Activated CD8-positive, alpha-beta T cell treated with anti-CD3 and anti-CD28 coated beads for 36 hours (primary cell): ENCODE measurements at regions of chr6 and their contacts with region 1.

Region 1: DNA sequence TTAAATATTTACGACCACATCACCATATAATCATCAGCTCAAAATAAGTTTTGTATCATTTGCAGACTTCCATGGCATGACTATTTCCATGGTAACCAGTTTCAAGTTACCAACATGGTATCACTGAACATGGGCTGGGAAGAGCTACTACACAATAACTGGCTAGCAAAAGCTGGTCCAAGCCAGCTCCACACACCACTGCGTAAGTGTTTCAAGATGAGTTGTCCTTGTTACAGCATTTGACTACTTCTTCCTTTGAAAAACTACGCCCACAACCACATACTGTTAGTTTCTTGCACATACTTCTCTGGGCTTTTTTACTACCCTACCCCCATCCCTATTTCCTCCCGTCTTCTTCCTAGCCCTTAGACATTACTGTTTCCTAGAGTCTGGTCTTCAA is 8.5 kb downstream of the CD164 start:
- DNase-seq: peak; percentile 75
- ATAC-seq: peak; percentile 92
- H3K4me3 Mint-ChIP-seq: peak overlapping the region; percentile 24
- H3K27ac Mint-ChIP-seq: peak overlapping the region; percentile 86
- H3K4me1 Mint-ChIP-seq: peaks cover 69% of the 10 kb centered on the region
- H3K27me3 Mint-ChIP-seq: no peaks in the 10 kb centered on the region
- CTCF ChIP-seq: no peak

Region 2: GRCh38 chr6:109212683-109213082 is 161.1 kb before region 1 on chr6:
- CTCF ChIA-PET with region 1: no interaction called
- POLR2A ChIA-PET with region 1: no interaction called
- intact Hi-C with region 1: no loop called
- DNase-seq: no peak
- ATAC-seq: no peak
- H3K4me3 Mint-ChIP-seq: no peak overlapping the region
- H3K27ac Mint-ChIP-seq: no peak overlapping the region
- H3K4me1 Mint-ChIP-seq: no peaks in the 10 kb centered on the region
- H3K27me3 Mint-ChIP-seq: peaks cover 4% of the 10 kb centered on the region
- CTCF ChIP-seq: no peak

Region 3: DNA sequence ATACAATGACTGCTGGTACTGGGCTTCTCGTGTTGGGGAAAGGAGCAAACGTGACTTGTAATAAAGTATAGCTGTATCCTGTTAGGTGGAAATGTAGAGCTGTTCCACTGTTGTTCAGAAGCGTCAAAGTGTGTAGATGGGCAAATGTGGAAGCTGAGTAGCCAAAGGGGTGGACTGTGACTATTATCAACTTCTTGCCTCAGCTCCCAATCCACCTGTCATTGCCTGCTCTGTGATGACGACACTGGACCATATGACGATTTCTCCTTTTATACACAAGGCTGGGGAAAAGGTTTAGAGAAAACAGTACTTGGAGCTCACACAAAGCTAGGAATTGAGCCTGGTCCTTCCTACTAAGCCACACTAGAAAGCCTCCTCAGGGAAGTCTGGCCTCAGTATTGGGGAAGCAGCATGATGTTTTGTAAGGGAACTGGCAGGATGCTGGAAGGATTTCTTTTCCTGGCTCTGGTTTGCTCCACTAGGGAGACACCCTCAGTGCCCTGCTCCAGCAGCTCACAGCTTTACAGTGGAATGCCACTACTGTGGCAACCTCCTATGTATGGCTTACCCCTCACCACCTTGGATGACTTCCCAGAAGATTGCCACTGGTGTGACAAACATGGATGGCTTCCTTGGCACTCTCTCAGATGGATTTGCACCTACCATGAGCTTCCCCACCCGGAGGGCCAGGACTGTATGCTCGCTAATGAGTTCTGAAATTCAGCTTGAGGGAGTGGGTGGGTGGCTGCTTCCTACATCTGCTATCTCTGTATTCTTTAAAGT is 11.5 kb before region 1 on chr6:
- CTCF ChIA-PET with region 1: interaction called, 4 read pairs
- POLR2A ChIA-PET with region 1: interaction called, 18 read pairs
- intact Hi-C with region 1: no loop called
- DNase-seq: no peak
- ATAC-seq: no peak
- H3K4me3 Mint-ChIP-seq: no peak overlapping the region
- H3K27ac Mint-ChIP-seq: no peak overlapping the region
- H3K4me1 Mint-ChIP-seq: peaks cover 13% of the 10 kb centered on the region
- H3K27me3 Mint-ChIP-seq: no peaks in the 10 kb centered on the region
- CTCF ChIP-seq: no peak